ENCODE measurements at regions of chr19 and their contacts with region 1.

Region 1: GRCh38 chr19:21202865-21203494 is 61.1 kb downstream of the ZNF431 start:
- DNase-seq: no peak
- ATAC-seq: peak; percentile 16

Region 2: GRCh38 chr19:21101521-21102242 is 101.3 kb before region 1 on chr19:
- intact Hi-C with region 1: no loop called
- DNase-seq: no peak
- ATAC-seq: no peak

Region 3: DNA sequence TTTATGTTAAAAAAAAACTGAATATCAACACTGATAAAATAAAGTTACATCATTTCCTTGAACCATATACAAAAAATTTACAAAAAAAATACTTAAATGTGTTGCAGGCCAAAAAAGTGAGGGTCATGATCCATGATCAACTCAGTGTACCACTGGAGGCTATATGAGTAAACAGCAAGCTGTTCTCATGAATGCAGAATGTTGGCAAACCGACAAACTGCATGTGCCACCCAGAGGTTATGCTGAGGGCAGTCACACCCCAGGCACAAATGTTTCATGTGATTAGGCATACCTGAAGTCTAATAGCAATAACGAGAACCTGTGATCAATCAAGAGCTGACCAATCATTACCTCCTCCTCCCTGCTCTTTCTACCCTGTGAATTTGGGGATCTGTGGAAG is 30.7 kb after region 1 on chr19:
- intact Hi-C with region 1: no loop called
- DNase-seq: no peak
- ATAC-seq: no peak

Region 4: GRCh38 chr19:21482863-21483276 is 279.9 kb after region 1 on chr19:
- intact Hi-C with region 1: loop called (anchors 1 kb)
- DNase-seq: peak; percentile 73
- ATAC-seq: peak; percentile 83

Region 5: DNA sequence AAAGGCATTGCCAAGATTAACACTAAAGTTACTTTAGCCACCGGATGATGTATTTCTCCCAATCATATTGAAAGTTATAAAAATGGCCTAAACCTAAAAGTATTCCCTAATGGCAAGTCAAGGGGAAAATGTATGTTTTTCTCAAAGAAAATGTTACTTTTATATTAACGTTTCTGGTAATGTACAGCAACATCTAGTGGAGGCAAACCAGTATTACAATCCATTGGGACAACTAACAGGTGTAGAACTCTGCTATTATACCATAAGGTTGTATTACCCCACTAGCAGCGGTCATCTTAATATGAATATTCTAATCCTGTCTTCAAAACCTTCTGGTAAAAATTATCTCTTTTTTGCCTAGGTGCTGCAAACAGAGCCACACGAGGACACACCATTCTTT is 495.2 kb after region 1 on chr19:
- intact Hi-C with region 1: loop called (anchors 10 kb)
- DNase-seq: no peak
- ATAC-seq: no peak